H1 (cell line): ENCODE measurements at regions of chr2 and their contacts with region 1.

Region 1: GRCh38 chr2:149017116-149017985 is 21.1 kb upstream of the LYPD6B start:
- DNase-seq: peak; percentile 27 to 89
- H3K4me3 ChIP-seq: no peak overlapping the region
- H3K27ac ChIP-seq: no peak overlapping the region
- H3K4me1 ChIP-seq: peaks cover 0 to 2% (median 1%) of the 10 kb centered on the region in 4 experiments; a peak in 1 of 7 replicates
- H3K27me3 ChIP-seq: no peaks in the 10 kb centered on the region
- CTCF ChIP-seq: peak; percentile 72 to 87 (median 82)
- EP300 ChIP-seq: no peak
- POLR2A ChIP-seq: no peak
- RAD21 ChIP-seq: peak; percentile 89 to 90

Region 2: GRCh38 chr2:148888003-148888501 is 129.3 kb before region 1 on chr2:
- CTCF ChIA-PET with region 1: no interaction called
- POLR2A ChIA-PET with region 1: no interaction called
- DNase-seq: no peak
- H3K4me3 ChIP-seq: peak overlapping the region; percentile 50 to 66 (median 60)
- H3K27ac ChIP-seq: no peak overlapping the region
- H3K4me1 ChIP-seq: peaks cover 0 to 3% (median 1%) of the 10 kb centered on the region in 4 experiments; a peak in 3 of 7 replicates
- H3K27me3 ChIP-seq: no peaks in the 10 kb centered on the region
- CTCF ChIP-seq: no peak
- EP300 ChIP-seq: no peak
- POLR2A ChIP-seq: no peak
- RAD21 ChIP-seq: peak in 1 of 2 experiments; percentile 0; a peak in 1 of 4 replicates

Region 3: GRCh38 chr2:149000158-149000938 is 17.0 kb before region 1 on chr2:
- CTCF ChIA-PET with region 1: interaction called, 14 read pairs
- POLR2A ChIA-PET with region 1: no interaction called
- DNase-seq: no peak
- H3K4me3 ChIP-seq: peak overlapping the region in 1 of 4 experiments; percentile 46; a peak in 3 of 8 replicates
- H3K27ac ChIP-seq: no peak overlapping the region
- H3K4me1 ChIP-seq: peaks cover 6 to 26% (median 22%) of the 10 kb centered on the region in 4 experiments; a peak in 6 of 7 replicates
- H3K27me3 ChIP-seq: no peaks in the 10 kb centered on the region
- CTCF ChIP-seq: no peak
- EP300 ChIP-seq: no peak
- POLR2A ChIP-seq: no peak
- RAD21 ChIP-seq: no peak

Region 4: DNA sequence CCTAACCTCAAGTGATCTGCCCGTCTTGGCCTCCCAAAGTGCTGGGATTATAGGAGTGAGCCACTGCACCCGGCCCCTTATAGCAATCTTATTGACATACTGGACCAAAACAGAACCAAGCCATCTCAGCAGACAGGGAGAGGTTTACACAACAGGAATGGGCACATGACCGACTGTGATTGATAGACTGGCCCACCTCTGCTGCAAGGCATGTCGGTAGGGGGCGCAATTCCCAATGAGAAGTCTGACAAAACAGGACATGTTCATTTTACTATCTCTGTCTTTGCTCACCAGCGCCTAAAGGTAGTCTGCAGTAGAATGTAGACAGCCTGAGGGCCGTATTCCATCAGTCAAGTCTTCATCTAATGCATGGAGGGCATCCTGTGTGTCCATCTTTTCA is 23.1 kb after region 1 on chr2:
- CTCF ChIA-PET with region 1: interaction called, 277 read pairs
- POLR2A ChIA-PET with region 1: no interaction called
- DNase-seq: peak; percentile 34 to 94
- H3K4me3 ChIP-seq: no peak overlapping the region
- H3K27ac ChIP-seq: no peak overlapping the region
- H3K4me1 ChIP-seq: peaks cover 0 to 5% (median 2%) of the 10 kb centered on the region in 4 experiments; a peak in 4 of 7 replicates
- H3K27me3 ChIP-seq: peaks cover 0 to 25% (median 16%) of the 10 kb centered on the region in 4 experiments; a peak in 6 of 7 replicates
- CTCF ChIP-seq: peak; percentile 77 to 95 (median 90)
- EP300 ChIP-seq: no peak
- POLR2A ChIP-seq: no peak
- RAD21 ChIP-seq: peak; percentile 80 to 82

Region 5: GRCh38 chr2:149082735-149083134 is 65.4 kb after region 1 on chr2:
- CTCF ChIA-PET with region 1: interaction called, 11 read pairs
- POLR2A ChIA-PET with region 1: no interaction called
- DNase-seq: no peak
- H3K4me3 ChIP-seq: no peak overlapping the region
- H3K27ac ChIP-seq: no peak overlapping the region
- H3K4me1 ChIP-seq: peaks cover 3 to 15% (median 10%) of the 10 kb centered on the region in 4 experiments; a peak in 5 of 7 replicates
- H3K27me3 ChIP-seq: no peaks in the 10 kb centered on the region; a peak in 1 of 7 replicates
- CTCF ChIP-seq: no peak
- EP300 ChIP-seq: no peak
- POLR2A ChIP-seq: no peak
- RAD21 ChIP-seq: no peak

Region 6: GRCh38 chr2:149561309-149561926 is 544.1 kb after region 1 on chr2:
- CTCF ChIA-PET with region 1: interaction called, 15 read pairs
- POLR2A ChIA-PET with region 1: no interaction called
- DNase-seq: no peak
- H3K4me3 ChIP-seq: no peak overlapping the region
- H3K27ac ChIP-seq: no peak overlapping the region
- H3K4me1 ChIP-seq: no peaks in the 10 kb centered on the region
- H3K27me3 ChIP-seq: no peaks in the 10 kb centered on the region
- CTCF ChIP-seq: peak in 2 of 3 experiments; percentile 48 to 56; a peak in 2 of 4 replicates
- EP300 ChIP-seq: no peak
- POLR2A ChIP-seq: no peak
- RAD21 ChIP-seq: peak; percentile 78 to 85